HCT116 (cell line): ENCODE measurements at regions of chrX and their contacts with region 1.

Region 1: GRCh38 chrX:46325312-46325877 is 219.8 kb downstream of the ZNF674 start:
- DNase-seq: peak; percentile 86
- ATAC-seq: peak; percentile 65
- H3K4me3 ChIP-seq: peak overlapping the region in 1 of 2 experiments; percentile 26; a peak in 1 of 4 replicates
- H3K27ac ChIP-seq: peak overlapping the region; percentile 88
- H3K4me1 ChIP-seq: peaks cover 66 to 98% of the 10 kb centered on the region in 2 experiments
- H3K27me3 ChIP-seq: no peaks in the 10 kb centered on the region
- CTCF ChIP-seq: no peak
- POLR2A ChIP-seq: no peak
- RAD21 ChIP-seq: no peak

Region 2: GRCh38 chrX:45824471-45824870 is 500.9 kb before region 1 on chrX:
- CTCF ChIA-PET with region 1: no interaction called
- POLR2A ChIA-PET with region 1: no interaction called
- RAD21 ChIA-PET with region 1: no interaction called
- intact Hi-C with region 1: loop called (anchors 10 kb)
- DNase-seq: peak; percentile 89
- ATAC-seq: peak; percentile 84
- H3K4me3 ChIP-seq: no peak overlapping the region
- H3K27ac ChIP-seq: peak overlapping the region; percentile 57; the same call in 1 of the 2 replicates
- H3K4me1 ChIP-seq: peaks cover 40 to 94% of the 10 kb centered on the region in 2 experiments
- H3K27me3 ChIP-seq: no peaks in the 10 kb centered on the region
- CTCF ChIP-seq: peak; percentile 31 to 72 (median 71); a peak in 5 of 6 replicates
- POLR2A ChIP-seq: no peak
- RAD21 ChIP-seq: peak; percentile 75

Region 3: DNA sequence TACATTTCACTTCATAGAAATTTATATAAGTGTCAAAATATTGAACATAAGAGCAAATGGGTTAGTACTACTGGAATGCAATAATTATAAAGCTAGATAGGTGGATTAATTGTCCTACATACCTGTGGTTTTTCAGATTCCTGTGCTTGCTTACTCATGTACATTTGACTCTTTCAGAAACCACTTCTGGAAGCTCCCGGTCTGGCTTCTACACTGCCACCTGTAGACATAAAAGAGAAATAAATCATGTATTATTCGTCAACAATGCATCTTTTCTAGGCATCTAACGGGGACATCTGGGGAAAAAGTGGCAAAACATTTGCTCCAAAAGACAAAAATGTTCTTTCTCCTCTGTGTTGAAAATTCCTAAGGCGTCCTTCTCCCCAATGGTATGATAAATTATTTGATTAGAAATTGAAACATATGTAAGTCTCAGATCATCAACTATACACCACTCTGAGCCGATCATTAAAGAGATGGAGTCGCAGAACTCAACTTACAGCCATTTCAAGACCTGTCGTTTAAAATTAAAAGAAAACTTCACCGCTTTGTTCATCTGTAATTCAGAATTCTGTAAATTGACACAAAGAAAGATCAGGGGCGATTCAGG is 476.0 kb before region 1 on chrX:
- CTCF ChIA-PET with region 1: no interaction called
- POLR2A ChIA-PET with region 1: no interaction called
- RAD21 ChIA-PET with region 1: no interaction called
- intact Hi-C with region 1: loop called (anchors 5 kb)
- DNase-seq: peak; percentile 57
- ATAC-seq: no peak
- H3K4me3 ChIP-seq: peak overlapping the region; percentile 76 to 81
- H3K27ac ChIP-seq: peak overlapping the region; percentile 87; the same call in 1 of the 2 replicates
- H3K4me1 ChIP-seq: peaks cover 18 to 64% of the 10 kb centered on the region in 2 experiments
- H3K27me3 ChIP-seq: no peaks in the 10 kb centered on the region
- CTCF ChIP-seq: peak in 1 of 3 experiments; percentile 21; a peak in 1 of 6 replicates
- POLR2A ChIP-seq: no peak
- RAD21 ChIP-seq: no peak

Region 4: GRCh38 chrX:46180258-46180687 is 145.1 kb before region 1 on chrX:
- CTCF ChIA-PET with region 1: no interaction called
- POLR2A ChIA-PET with region 1: no interaction called
- RAD21 ChIA-PET with region 1: no interaction called
- intact Hi-C with region 1: loop called (anchors 5 kb)
- DNase-seq: peak; percentile 85
- ATAC-seq: peak; percentile 89
- H3K4me3 ChIP-seq: peak overlapping the region in 1 of 2 experiments; percentile 20; a peak in 2 of 4 replicates
- H3K27ac ChIP-seq: peak overlapping the region; percentile 86
- H3K4me1 ChIP-seq: peaks cover 36 to 56% of the 10 kb centered on the region in 2 experiments
- H3K27me3 ChIP-seq: no peaks in the 10 kb centered on the region
- CTCF ChIP-seq: 0 out of 6 replicates have a peak, but pooled peaks of 1 of the 3 experiments have one; percentile 5
- POLR2A ChIP-seq: no peak
- RAD21 ChIP-seq: no peak; the same call in 1 of the 2 replicates

Region 5: DNA sequence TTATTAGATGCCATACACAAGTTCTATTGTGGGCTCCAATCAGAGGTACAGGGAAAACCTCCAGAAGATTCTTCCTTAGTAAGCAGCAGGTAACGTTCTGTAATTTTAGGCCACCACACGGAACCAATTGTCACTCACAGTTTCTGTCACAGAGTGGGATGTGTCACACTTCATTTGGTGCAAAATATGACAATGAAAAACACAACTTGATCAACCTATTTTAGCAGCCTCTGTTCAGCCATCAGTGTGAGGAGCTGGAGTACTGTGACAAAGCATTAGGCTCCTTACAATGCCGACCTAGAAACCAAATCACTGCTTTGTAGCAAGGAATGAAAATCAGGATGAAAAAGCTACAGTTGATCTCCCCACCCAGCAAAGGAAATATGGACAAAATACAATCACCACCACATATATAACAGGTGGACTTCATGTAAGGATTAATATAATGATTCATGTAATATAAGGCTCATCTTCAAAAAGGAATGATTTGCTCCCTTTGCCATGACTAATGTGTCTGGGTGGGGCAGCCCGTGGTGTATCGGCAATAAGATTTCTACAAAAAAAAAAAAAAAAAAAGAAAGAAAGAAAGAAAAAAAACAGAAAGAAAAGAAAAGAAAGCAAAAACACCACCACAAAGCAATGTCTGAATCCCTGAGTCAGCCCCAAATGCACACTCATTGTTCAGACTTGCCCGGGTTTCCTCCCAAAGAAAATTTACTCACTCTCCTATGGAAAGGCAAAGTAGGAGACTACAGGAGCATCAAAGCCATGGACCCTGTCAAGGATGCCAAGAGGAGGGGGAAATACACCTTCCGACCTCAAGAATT is 397.6 kb after region 1 on chrX:
- CTCF ChIA-PET with region 1: no interaction called
- POLR2A ChIA-PET with region 1: no interaction called
- RAD21 ChIA-PET with region 1: no interaction called
- intact Hi-C with region 1: no loop called
- DNase-seq: no peak
- ATAC-seq: no peak
- H3K4me3 ChIP-seq: no peak overlapping the region
- H3K27ac ChIP-seq: no peak overlapping the region
- H3K4me1 ChIP-seq: peaks cover 2 to 9% of the 10 kb centered on the region in 2 experiments; a peak in 2 of 4 replicates
- H3K27me3 ChIP-seq: no peaks in the 10 kb centered on the region
- CTCF ChIP-seq: no peak
- POLR2A ChIP-seq: no peak
- RAD21 ChIP-seq: no peak